ENCODE measurements at regions of chr19 and their contacts with region 1.

Region 1: GRCh38 chr19:12789904-12790619 is 1.2 kb upstream of the JUNB start:
- DNase-seq: no peak
- H3K4me3 ChIP-seq: peak overlapping the region; percentile 55
- CTCF ChIP-seq: no peak

Region 2: DNA sequence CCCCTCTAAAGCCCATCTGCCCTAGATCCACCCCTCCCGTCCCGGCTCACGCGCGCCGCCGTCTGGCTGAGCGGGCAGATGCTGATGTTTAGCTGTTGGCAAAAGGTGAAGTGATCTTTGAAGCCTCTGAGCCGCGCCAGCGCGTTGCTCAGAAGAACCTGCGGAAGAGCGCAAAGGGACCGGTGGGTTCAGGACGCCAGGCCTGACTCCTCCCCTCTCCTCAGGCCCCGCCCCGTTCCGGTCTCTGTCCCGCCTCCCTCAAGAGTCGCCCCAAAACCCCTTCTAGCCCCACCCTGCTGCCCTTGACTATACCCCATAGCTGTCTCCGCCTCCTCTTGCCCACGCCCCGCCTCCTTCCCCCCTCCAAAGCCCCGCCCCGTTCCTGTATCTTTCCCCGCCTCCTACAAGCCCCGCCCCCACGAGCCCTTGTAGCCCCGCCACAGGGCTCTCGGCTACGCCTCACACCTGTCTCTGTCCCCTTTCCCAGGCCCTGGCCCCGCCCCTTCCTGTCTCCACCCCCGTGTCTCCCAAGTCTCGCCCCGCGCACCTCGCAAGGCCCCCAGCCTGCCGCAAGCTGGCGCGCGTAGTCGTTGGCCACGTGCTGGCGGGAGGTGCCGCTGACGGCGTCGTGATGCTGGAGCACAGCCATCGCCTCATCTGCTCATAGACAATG is 133.0 kb before region 1 on chr19:
- CTCF ChIA-PET with region 1: no interaction called
- POLR2A ChIA-PET with region 1: no interaction called
- DNase-seq: no peak
- H3K4me3 ChIP-seq: no peak overlapping the region
- CTCF ChIP-seq: no peak

Region 3: DNA sequence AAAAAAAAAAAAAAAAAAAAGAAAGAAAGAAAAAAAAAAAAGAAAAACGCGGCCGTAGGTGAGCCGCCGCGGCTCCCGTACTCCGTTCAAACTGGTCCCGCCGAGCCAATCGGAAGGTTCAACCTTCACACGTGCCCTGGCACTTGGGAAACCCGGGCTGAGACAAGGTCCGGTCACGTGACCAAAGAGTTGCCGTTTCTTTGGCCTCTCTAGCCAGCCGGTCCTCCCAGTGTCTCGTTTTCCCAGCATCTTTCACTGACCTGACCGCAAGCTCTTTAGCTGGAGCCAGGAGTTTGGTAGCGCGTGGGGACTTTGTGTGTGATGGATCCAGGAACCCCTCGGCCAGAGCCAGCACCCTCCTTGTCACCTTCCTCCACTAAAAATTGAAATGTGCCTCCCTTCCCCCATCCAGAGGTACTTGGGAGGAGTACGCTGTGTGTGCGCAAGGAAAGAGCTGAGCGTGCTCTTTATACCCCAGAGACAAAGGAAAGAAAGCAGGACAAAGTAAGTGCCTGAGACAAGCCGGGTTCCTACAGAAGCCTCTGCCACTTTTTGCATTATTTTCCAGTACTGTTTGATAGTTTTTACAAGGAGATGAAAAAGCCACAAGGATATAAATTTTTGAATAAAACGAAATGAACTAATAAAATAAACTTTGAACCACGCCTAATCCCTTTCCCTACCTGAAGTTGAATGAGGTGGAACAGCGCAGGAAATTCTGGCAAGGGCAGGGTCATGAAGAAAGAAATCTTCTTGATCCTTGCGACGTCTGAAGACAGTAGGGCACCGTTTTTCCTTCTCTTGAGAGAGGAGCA is 67.3 kb before region 1 on chr19:
- CTCF ChIA-PET with region 1: interaction called, 24 read pairs
- POLR2A ChIA-PET with region 1: interaction called, 33 read pairs
- DNase-seq: peak; percentile 95
- H3K4me3 ChIP-seq: peak overlapping the region; percentile 80
- CTCF ChIP-seq: no peak

Region 4: GRCh38 chr19:12736995-12737834 is 52.8 kb before region 1 on chr19 and contains the start of gene GET3:
- CTCF ChIA-PET with region 1: interaction called, 5 read pairs
- POLR2A ChIA-PET with region 1: interaction called, 17 read pairs
- DNase-seq: peak; percentile 100
- H3K4me3 ChIP-seq: peak within 1 kb of the TSS; percentile 93
- CTCF ChIP-seq: no peak

Region 5: GRCh38 chr19:12766051-12766521 is 24.0 kb before region 1 on chr19:
- CTCF ChIA-PET with region 1: interaction called, 1,565 read pairs
- POLR2A ChIA-PET with region 1: interaction called, 51 read pairs
- DNase-seq: no peak
- H3K4me3 ChIP-seq: peak overlapping the region; percentile 68
- CTCF ChIP-seq: peak; percentile 99

Region 6: DNA sequence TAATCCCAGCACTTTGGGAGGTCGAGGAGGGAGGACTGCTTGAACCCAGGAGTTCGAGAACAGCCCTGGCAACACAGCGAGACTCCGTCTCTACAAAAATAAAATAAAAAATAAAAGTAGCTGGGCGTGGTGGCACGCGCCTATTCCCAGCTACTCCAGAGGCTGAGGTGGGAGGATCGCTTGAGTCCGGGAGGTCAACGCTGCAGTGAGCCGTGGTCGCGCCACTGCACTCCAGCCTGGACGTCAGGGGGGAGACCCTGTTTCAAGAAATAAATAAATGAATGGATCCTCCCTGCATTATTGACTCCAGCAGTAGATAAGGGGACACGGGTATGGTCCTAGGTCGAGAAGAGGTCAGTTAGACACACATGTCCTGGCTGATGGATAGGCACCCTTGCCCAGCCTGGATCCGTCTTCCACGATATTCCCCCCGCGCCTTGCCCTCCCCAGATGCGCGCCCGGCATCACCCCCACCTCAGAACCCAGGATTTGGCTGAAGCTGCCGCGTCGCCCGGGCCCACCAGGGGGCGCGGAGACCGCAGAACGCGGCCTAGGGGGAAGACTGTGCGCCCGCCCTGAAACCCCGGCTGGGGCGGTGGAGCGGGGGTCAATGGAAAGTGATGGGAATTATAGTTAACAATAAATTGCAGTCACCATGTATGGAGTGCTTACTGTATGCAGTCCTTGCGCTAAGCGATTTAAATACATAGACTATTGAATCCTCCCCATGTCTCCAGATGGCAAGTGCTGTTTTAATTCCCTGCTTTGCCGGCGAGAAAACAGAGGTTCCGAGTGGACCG is 12.6 kb before region 1 on chr19:
- CTCF ChIA-PET with region 1: interaction called, 1,565 read pairs
- POLR2A ChIA-PET with region 1: interaction called, 158 read pairs
- DNase-seq: no peak
- H3K4me3 ChIP-seq: peak overlapping the region; percentile 67
- CTCF ChIP-seq: peak; percentile 99

Region 7: GRCh38 chr19:12806239-12807081 is 16.4 kb after region 1 on chr19 and contains the start of gene RNASEH2A:
- CTCF ChIA-PET with region 1: interaction called, 34 read pairs
- POLR2A ChIA-PET with region 1: interaction called, 10 read pairs
- DNase-seq: no peak
- H3K4me3 ChIP-seq: peak within 1 kb of the TSS; percentile 87
- CTCF ChIP-seq: no peak

Region 8: DNA sequence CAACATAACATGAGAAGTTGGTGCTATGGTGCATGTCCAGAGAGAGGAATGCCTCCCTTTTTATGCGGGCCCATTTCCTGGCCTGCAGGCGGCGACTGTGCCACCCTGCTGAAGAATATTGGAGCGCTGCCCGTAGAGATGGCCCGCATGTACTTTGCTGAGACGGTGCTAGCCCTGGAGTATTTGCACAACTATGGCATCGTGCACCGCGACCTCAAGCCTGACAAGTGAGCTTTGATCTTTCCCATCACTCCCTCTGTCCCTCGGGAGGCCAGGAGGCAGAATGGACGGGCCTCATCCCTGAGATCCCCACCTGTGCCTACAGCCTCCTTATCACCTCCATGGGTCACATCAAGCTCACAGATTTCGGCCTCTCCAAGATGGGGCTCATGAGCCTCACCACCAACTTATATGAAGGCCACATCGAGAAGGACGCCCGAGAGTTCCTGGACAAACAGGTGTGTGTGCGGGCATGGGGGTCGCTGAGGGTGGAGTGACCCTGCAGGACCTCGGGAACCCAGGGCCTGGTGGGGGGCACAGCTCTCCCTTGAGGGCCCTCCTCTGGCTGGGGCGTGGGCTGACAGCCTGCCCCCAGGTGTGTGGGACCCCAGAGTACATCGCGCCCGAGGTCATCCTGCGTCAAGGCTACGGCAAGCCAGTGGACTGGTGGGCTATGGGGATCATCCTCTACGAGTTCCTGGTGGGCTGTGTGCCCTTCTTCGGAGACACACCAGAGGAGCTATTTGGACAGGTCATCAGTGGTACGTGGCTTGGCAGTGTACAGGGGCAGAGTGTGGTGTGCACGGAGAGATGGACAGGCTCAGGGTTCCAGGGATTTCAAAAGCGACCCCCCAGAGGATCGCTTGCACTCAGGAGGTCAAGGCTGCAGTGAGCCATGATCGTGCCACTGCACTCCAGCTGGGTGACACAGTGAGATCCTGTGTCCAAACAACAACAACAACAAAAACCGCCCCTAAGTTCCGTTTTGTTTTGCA is 75.0 kb after region 1 on chr19:
- CTCF ChIA-PET with region 1: no interaction called
- POLR2A ChIA-PET with region 1: no interaction called
- DNase-seq: no peak
- H3K4me3 ChIP-seq: no peak overlapping the region
- CTCF ChIP-seq: no peak